ENCODE measurements at regions of chr12 and their contacts with region 1.

Region 1: GRCh38 chr12:77685112-77685511 is 145.6 kb upstream of the NAV3 start:
- DNase-seq: peak; percentile 7
- ATAC-seq: peak; percentile 83
- H3K4me3 ChIP-seq: no peak overlapping the region
- H3K27ac ChIP-seq: no peak overlapping the region
- H3K4me1 ChIP-seq: no peaks in the 10 kb centered on the region
- H3K27me3 ChIP-seq: no peaks in the 10 kb centered on the region
- CTCF ChIP-seq: peak; percentile 43 to 69 (median 54); a peak in 4 of 6 replicates
- EP300 ChIP-seq: no peak
- POLR2A ChIP-seq: no peak
- RAD21 ChIP-seq: peak; percentile 59

Region 2: GRCh38 chr12:76878899-76879709 is 806.0 kb before region 1 on chr12 and contains the start of gene CSRP2:
- CTCF ChIA-PET with region 1: no interaction called
- POLR2A ChIA-PET with region 1: no interaction called
- RAD21 ChIA-PET with region 1: no interaction called
- SMC1A ChIA-PET with region 1: no interaction called
- in situ Hi-C with region 1: no loop called
- intact Hi-C with region 1: no loop called
- DNase-seq: peak; percentile 13
- ATAC-seq: peak; percentile 94
- H3K4me3 ChIP-seq: peak within 1 kb of the TSS; percentile 72
- H3K27ac ChIP-seq: no peak within 1 kb of the TSS
- H3K4me1 ChIP-seq: peaks cover 3% of the 10 kb centered on the region; the same call in 1 of the 2 replicates
- H3K27me3 ChIP-seq: peaks cover 0 to 7% of the 10 kb centered on the region in 2 experiments; a peak in 2 of 4 replicates
- CTCF ChIP-seq: no peak
- EP300 ChIP-seq: no peak
- POLR2A ChIP-seq: peak; percentile 74
- RAD21 ChIP-seq: no peak
- polyA plus RNA-seq, gene CSRP2: 0.47 to 0.69 TPM

Region 3: DNA sequence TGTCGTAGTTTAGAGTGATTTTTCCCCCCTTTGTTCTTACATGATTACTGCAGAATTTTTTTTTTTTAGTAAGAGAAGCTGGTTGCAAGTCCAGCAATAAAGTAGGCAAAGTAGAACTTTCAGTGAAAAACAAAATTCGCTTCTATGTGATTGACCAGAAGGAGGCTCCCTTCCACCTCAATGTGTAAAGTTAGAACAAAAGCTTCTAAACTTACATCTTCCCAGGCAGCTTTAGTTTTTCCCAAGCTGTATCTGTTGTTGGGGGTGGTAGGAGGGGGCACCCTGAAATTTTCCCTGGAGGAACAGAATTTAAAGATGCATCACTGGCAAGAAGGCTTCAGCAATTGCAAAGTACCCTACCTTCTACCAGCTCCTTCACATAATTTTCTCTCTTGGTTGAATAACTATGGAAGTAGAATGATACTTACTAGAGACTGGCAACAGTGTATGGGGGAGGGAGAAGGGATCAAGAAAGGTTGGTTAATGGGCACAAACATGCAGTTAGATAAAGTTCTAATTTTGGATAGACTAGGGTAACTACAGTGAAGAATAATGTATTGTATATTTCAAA is 532.4 kb before region 1 on chr12:
- CTCF ChIA-PET with region 1: no interaction called
- POLR2A ChIA-PET with region 1: no interaction called
- RAD21 ChIA-PET with region 1: no interaction called
- SMC1A ChIA-PET with region 1: interaction called, 3 read pairs
- in situ Hi-C with region 1: no loop called
- intact Hi-C with region 1: loop called (anchors 1 kb)
- DNase-seq: no peak
- ATAC-seq: no peak
- H3K4me3 ChIP-seq: no peak overlapping the region
- H3K27ac ChIP-seq: no peak overlapping the region
- H3K4me1 ChIP-seq: no peaks in the 10 kb centered on the region
- H3K27me3 ChIP-seq: no peaks in the 10 kb centered on the region
- CTCF ChIP-seq: peak in 2 of 3 experiments; percentile 23 to 25; a peak in 1 of 6 replicates
- EP300 ChIP-seq: no peak
- POLR2A ChIP-seq: no peak
- RAD21 ChIP-seq: peak; percentile 36; the same call in 1 of the 2 replicates

Region 4: GRCh38 chr12:77540097-77540496 is 145.0 kb before region 1 on chr12:
- CTCF ChIA-PET with region 1: no interaction called
- POLR2A ChIA-PET with region 1: no interaction called
- RAD21 ChIA-PET with region 1: no interaction called
- SMC1A ChIA-PET with region 1: no interaction called
- in situ Hi-C with region 1: no loop called
- intact Hi-C with region 1: loop called (anchors 1 kb)
- DNase-seq: no peak
- ATAC-seq: peak; percentile 56; the same call in 2 of the 3 replicates
- H3K4me3 ChIP-seq: no peak overlapping the region
- H3K27ac ChIP-seq: no peak overlapping the region
- H3K4me1 ChIP-seq: no peaks in the 10 kb centered on the region
- H3K27me3 ChIP-seq: no peaks in the 10 kb centered on the region
- CTCF ChIP-seq: peak in 1 of 3 experiments; percentile 27; a peak in 2 of 6 replicates
- EP300 ChIP-seq: no peak
- POLR2A ChIP-seq: no peak
- RAD21 ChIP-seq: no peak

Measured in GM12878 (cell line).